AG04449 (cell line): ENCODE measurements at regions of chr1 and their contacts with region 1.

Region 1: DNA sequence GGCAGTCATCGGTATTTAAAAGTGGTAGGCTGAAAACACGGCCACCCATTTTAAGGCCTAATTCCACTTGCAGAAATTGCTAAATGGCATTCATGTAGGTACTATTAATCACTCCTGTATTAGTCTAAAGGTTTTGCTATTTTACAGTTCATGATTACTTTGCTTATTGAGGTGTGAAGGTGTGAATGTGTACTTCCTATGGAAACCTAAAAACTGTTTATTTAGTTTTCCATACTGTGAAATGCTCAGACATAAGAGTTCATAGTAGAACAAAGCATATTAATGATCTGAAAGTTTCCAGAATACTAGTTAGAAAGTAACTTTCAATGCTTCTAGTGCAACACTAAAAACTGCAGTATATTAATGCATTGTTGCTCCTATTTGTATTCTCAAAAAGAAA is 69.8 kb downstream of the ITGB3BP start:
- DNase-seq: no peak
- H3K4me3 ChIP-seq: no peak overlapping the region
- CTCF ChIP-seq: no peak

Region 2: DNA sequence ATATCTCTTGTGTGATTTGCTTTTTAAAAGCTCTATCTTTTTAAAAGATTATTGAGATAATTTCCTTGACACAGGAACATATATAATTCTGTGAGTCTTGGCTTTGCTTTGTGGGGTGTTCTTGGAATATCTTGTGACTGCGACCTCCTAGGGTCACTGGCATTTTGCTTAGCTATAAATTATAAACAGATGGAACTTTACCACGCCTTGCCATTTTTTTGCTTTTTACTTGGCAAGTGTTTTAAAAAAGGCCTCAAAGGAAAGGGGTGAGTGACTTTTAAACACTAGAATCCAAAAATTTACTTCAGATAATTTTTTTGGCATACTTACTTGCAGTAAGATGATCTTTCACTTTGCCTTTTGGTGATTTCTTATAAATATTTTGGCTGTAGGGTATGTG is 42.2 kb before region 1 on chr1:
- CTCF ChIA-PET with region 1: no interaction called
- POLR2A ChIA-PET with region 1: no interaction called
- DNase-seq: no peak
- H3K4me3 ChIP-seq: no peak overlapping the region
- CTCF ChIP-seq: no peak

Region 3: GRCh38 chr1:63442141-63442475 is 11.1 kb before region 1 on chr1:
- CTCF ChIA-PET with region 1: interaction called, 11 read pairs
- POLR2A ChIA-PET with region 1: no interaction called
- DNase-seq: no peak
- H3K4me3 ChIP-seq: no peak overlapping the region
- CTCF ChIP-seq: no peak

Region 4: GRCh38 chr1:63463248-63463647 is 10.0 kb after region 1 on chr1:
- CTCF ChIA-PET with region 1: no interaction called
- POLR2A ChIA-PET with region 1: no interaction called
- DNase-seq: no peak
- H3K4me3 ChIP-seq: no peak overlapping the region
- CTCF ChIP-seq: no peak